ENCODE measurements at regions of chr6 and their contacts with region 1.

Region 1: GRCh38 chr6:143468026-143468425 is 17.4 kb downstream of the PEX3 start:
- DNase-seq: no peak
- ATAC-seq: no peak
- H3K4me3 ChIP-seq: no peak overlapping the region
- H3K4me3 Mint-ChIP-seq: no peak overlapping the region
- H3K27ac ChIP-seq: no peak overlapping the region
- H3K27ac Mint-ChIP-seq: no peak overlapping the region
- H3K4me1 ChIP-seq: no peaks in the 10 kb centered on the region
- H3K4me1 Mint-ChIP-seq: no peaks in the 10 kb centered on the region
- H3K27me3 ChIP-seq: no peaks in the 10 kb centered on the region
- H3K27me3 Mint-ChIP-seq: no peaks in the 10 kb centered on the region
- CTCF ChIP-seq: no peak

Region 2: GRCh38 chr6:143490775-143491174 is 22.7 kb after region 1 on chr6:
- CTCF ChIA-PET with region 1: no interaction called
- POLR2A ChIA-PET with region 1: no interaction called
- intact Hi-C with region 1: loop called in 1 of 2 experiments (anchors 1 kb)
- DNase-seq: no peak
- ATAC-seq: no peak
- H3K4me3 ChIP-seq: no peak overlapping the region
- H3K4me3 Mint-ChIP-seq: no peak overlapping the region
- H3K27ac ChIP-seq: no peak overlapping the region
- H3K27ac Mint-ChIP-seq: no peak overlapping the region
- H3K4me1 ChIP-seq: no peaks in the 10 kb centered on the region
- H3K4me1 Mint-ChIP-seq: no peaks in the 10 kb centered on the region
- H3K27me3 ChIP-seq: no peaks in the 10 kb centered on the region
- H3K27me3 Mint-ChIP-seq: no peaks in the 10 kb centered on the region
- CTCF ChIP-seq: no peak

Region 3: GRCh38 chr6:143536865-143537691 is 69.1 kb after region 1 on chr6:
- CTCF ChIA-PET with region 1: no interaction called
- POLR2A ChIA-PET with region 1: no interaction called
- intact Hi-C with region 1: no loop called
- DNase-seq: peak; percentile 35 to 84 (median 58)
- ATAC-seq: peak; percentile 65
- H3K4me3 ChIP-seq: peak overlapping the region; percentile 57
- H3K4me3 Mint-ChIP-seq: peak overlapping the region; percentile 91
- H3K27ac ChIP-seq: peak overlapping the region; percentile 14 to 82
- H3K27ac Mint-ChIP-seq: peak overlapping the region; percentile 95
- H3K4me1 ChIP-seq: peaks cover 52% of the 10 kb centered on the region
- H3K4me1 Mint-ChIP-seq: peaks cover 51% of the 10 kb centered on the region
- H3K27me3 ChIP-seq: no peaks in the 10 kb centered on the region
- H3K27me3 Mint-ChIP-seq: no peaks in the 10 kb centered on the region
- CTCF ChIP-seq: peak; percentile 21

Region 4: DNA sequence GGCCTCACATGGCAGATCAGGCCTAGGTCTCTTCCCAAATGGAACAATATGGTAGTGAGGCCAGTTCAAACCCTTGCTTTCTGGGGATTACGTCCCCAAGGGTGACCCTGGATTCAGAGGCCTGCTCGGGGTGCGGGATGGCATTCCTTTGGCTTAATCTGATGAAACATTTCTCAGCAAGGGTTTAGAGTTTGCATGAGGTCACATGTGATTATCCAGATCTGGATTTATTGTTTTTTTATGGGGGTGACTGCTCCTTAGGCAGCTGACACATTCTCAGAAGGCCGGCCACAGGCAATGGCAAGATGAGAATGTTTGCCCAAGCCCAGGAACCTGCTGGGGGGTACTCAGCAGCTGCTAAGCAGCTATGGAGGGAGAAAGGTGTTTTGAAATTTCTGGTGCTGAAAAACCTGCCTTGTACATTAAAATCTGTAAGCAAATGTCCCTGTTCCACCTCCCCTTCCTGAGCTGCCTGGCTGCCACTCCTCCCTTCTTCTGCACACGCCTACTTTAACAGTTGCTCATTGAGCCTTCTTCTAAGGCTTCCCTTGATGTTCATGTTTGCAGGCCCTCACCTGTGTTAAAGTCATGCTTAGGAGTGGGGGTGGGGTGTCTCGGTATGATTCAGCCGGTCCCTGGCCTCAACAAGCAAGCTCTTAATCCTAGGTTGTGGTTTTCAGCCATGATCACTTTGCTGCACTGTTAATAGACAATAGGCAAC is 81.4 kb after region 1 on chr6:
- CTCF ChIA-PET with region 1: no interaction called
- POLR2A ChIA-PET with region 1: no interaction called
- intact Hi-C with region 1: no loop called
- DNase-seq: peak in 9 of 14 experiments; percentile 20 to 74 (median 47)
- ATAC-seq: peak; percentile 56
- H3K4me3 ChIP-seq: no peak overlapping the region
- H3K4me3 Mint-ChIP-seq: peak overlapping the region; percentile 43
- H3K27ac ChIP-seq: no peak overlapping the region
- H3K27ac Mint-ChIP-seq: peak overlapping the region; percentile 80
- H3K4me1 ChIP-seq: peaks cover 41% of the 10 kb centered on the region
- H3K4me1 Mint-ChIP-seq: peaks cover 77% of the 10 kb centered on the region
- H3K27me3 ChIP-seq: no peaks in the 10 kb centered on the region
- H3K27me3 Mint-ChIP-seq: no peaks in the 10 kb centered on the region
- CTCF ChIP-seq: no peak